CD8-positive, alpha-beta memory T cell (primary cell): ENCODE measurements at regions of chr3 and their contacts with region 1.

Region 1: DNA sequence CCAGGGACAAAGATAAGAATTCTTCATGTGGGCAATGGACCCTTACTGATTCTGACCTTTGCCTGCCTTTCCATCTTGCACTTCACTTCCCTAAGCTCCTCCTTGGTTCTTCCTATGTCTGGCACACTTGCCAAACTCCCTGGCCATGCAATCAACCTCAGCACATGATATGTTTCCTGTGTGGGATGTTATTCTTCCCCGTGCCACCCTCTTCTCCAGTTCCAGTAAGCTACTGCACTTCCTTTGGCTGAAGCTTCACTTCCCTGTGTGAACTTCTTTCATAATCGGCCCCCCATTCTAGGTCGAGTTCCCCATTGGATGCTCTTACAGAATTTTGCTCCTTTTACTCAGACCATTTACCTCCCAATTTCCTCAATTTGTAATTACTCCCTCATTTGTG is 10.7 kb upstream of the TASOR start:
- DNase-seq: no peak
- H3K4me3 ChIP-seq: peak overlapping the region; percentile 11
- H3K4me3 Mint-ChIP-seq: peak overlapping the region; percentile 85 to 94 (median 88)
- H3K27ac ChIP-seq: no peak overlapping the region
- H3K27ac Mint-ChIP-seq: peak overlapping the region; percentile 66 to 91 (median 82)
- H3K4me1 ChIP-seq: peaks cover 37% of the 10 kb centered on the region
- H3K4me1 Mint-ChIP-seq: peaks cover 44 to 52% (median 49%) of the 10 kb centered on the region in 3 donors
- H3K27me3 ChIP-seq: no peaks in the 10 kb centered on the region
- H3K27me3 Mint-ChIP-seq: no peaks in the 10 kb centered on the region

Region 2: GRCh38 chr3:56725175-56725574 is 31.4 kb after region 1 on chr3:
- CTCF ChIA-PET with region 1: no interaction called
- POLR2A ChIA-PET with region 1: interaction called, 13 read pairs
- DNase-seq: peak; percentile 31 to 84 (median 64)
- H3K4me3 ChIP-seq: peak overlapping the region; percentile 26
- H3K4me3 Mint-ChIP-seq: peak overlapping the region; percentile 57 to 82 (median 76)
- H3K27ac ChIP-seq: no peak overlapping the region
- H3K27ac Mint-ChIP-seq: peak overlapping the region; percentile 77 to 96 (median 94)
- H3K4me1 ChIP-seq: peaks cover 32% of the 10 kb centered on the region
- H3K4me1 Mint-ChIP-seq: peaks cover 63 to 74% (median 67%) of the 10 kb centered on the region in 3 donors
- H3K27me3 ChIP-seq: no peaks in the 10 kb centered on the region
- H3K27me3 Mint-ChIP-seq: no peaks in the 10 kb centered on the region